SK-N-SH (cell line): ENCODE measurements at regions of chr20 and their contacts with region 1.

Region 1: DNA sequence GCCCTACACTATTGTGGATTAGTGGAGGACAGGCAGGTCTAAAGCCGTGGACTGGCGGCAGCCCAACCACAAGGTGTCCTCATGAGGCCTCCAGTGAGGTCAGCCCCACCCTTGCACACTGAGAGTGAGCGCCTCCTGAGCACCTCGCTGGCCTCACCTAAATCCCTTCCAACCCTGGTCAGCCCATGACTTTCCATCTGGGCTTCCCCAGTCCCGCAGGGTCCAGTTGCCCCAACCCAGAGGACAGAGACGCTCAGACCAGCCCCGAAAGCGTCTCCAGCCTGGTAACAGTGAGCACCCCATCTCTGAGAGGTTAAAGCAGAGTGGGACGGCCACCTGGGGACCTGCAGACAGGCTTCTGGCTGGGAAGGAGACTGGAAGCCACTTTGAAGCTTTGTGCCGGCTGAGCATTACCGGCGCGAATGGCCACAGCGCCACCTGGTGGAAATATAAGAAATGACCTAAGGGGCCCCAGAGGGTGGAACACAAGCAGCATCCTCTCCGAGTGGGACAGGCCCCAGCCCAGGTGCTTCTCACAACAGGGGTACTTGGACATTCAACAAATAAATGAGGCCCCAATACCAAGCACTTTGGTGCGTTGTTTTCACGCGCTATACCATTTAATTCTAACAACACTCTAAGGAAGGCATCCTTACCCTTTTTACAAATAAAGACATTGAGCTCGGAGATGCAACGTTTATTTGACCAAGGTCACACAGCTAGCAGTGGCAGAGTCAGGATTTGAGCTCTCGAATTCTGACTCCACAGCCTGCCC is 65.7 kb upstream of the TOP1 start:
- DNase-seq: peak; percentile 81
- H3K4me3 ChIP-seq: no peak overlapping the region; a peak in 1 of 4 replicates
- H3K27ac ChIP-seq: no peak overlapping the region
- H3K4me1 ChIP-seq: no peaks in the 10 kb centered on the region; a peak in 1 of 4 replicates
- H3K27me3 ChIP-seq: no peaks in the 10 kb centered on the region
- CTCF ChIP-seq: peak; percentile 81
- EP300 ChIP-seq: no peak
- RAD21 ChIP-seq: peak; percentile 91

Region 2: GRCh38 chr20:39264506-39265172 is 1698.3 kb before region 1 on chr20:
- CTCF ChIA-PET with region 1: interaction called, 17 read pairs
- POLR2A ChIA-PET with region 1: no interaction called
- DNase-seq: peak; percentile 64
- H3K4me3 ChIP-seq: no peak overlapping the region; a peak in 1 of 4 replicates
- H3K27ac ChIP-seq: no peak overlapping the region
- H3K4me1 ChIP-seq: peaks cover 0 to 11% of the 10 kb centered on the region in 2 experiments; a peak in 1 of 4 replicates
- H3K27me3 ChIP-seq: no peaks in the 10 kb centered on the region
- CTCF ChIP-seq: peak; percentile 83
- EP300 ChIP-seq: no peak
- RAD21 ChIP-seq: peak; percentile 67

Region 3: DNA sequence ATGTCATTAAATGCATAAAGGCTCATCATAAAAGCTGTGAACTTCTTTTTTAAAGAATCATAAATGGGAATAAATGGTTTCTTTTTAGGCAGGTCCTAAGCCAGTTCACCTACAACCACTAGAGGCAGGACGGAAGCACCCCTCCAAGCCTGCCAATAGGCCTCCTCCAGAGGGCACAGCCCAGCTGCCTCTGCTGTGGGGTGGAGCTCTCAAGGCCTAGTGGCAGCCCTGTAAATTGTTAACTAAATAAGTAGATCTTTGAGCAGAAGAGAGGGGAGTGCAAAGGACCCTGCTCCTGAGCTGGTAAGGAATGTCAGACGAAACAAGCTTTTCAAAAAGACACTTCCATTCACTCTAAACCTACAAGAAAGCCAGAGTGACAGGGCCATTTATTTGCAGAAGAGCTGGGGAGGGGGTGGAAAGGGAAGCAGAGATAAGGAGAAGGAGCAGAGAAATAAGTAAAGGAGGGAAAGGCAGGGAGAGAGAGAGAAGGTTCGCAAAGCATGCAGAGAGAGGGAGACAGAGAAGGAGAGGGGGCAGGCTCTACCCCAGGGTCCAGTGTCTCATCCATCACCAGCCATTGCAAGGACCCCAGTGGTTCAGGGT is 255.8 kb before region 1 on chr20:
- CTCF ChIA-PET with region 1: interaction called, 13 read pairs
- POLR2A ChIA-PET with region 1: no interaction called
- DNase-seq: no peak
- H3K4me3 ChIP-seq: no peak overlapping the region
- H3K27ac ChIP-seq: no peak overlapping the region
- H3K4me1 ChIP-seq: no peaks in the 10 kb centered on the region; a peak in 1 of 4 replicates
- H3K27me3 ChIP-seq: no peaks in the 10 kb centered on the region
- CTCF ChIP-seq: no peak
- EP300 ChIP-seq: no peak
- RAD21 ChIP-seq: 0 out of 2 replicates have a peak, but pooled peaks have one; percentile 6

Region 4: DNA sequence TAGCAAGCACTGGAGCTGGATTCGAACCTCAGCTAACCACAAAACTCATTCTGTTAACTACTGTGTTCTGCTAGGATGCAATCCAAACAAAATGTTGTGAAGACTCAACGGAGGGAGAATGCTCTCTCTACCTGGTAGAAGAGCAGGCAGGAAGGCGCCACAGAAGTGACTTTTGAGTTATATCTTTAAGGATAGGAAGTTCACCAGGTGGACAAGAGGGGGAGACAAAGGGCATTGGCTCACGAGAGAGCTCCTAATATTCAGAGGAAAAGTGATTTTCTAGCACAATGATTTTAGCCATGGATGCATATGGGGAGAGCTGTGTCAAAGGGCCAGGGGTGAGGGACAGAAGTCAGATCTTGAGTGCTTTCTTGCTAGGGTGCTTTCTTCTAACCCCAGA is 165.5 kb before region 1 on chr20:
- CTCF ChIA-PET with region 1: interaction called, 45 read pairs
- POLR2A ChIA-PET with region 1: no interaction called
- DNase-seq: no peak
- H3K4me3 ChIP-seq: no peak overlapping the region; a peak in 1 of 4 replicates
- H3K27ac ChIP-seq: no peak overlapping the region
- H3K4me1 ChIP-seq: no peaks in the 10 kb centered on the region
- H3K27me3 ChIP-seq: no peaks in the 10 kb centered on the region
- CTCF ChIP-seq: peak; percentile 51
- EP300 ChIP-seq: no peak
- RAD21 ChIP-seq: peak; percentile 71

Region 5: GRCh38 chr20:40945754-40946450 is 17.0 kb before region 1 on chr20:
- CTCF ChIA-PET with region 1: interaction called, 26 read pairs
- POLR2A ChIA-PET with region 1: no interaction called
- DNase-seq: peak; percentile 83
- H3K4me3 ChIP-seq: no peak overlapping the region
- H3K27ac ChIP-seq: no peak overlapping the region
- H3K4me1 ChIP-seq: no peaks in the 10 kb centered on the region; a peak in 1 of 4 replicates
- H3K27me3 ChIP-seq: no peaks in the 10 kb centered on the region
- CTCF ChIP-seq: peak; percentile 54
- EP300 ChIP-seq: no peak
- RAD21 ChIP-seq: peak; percentile 95

Region 6: GRCh38 chr20:40990542-40991120 is 27.7 kb after region 1 on chr20:
- CTCF ChIA-PET with region 1: interaction called, 17 read pairs
- POLR2A ChIA-PET with region 1: no interaction called
- DNase-seq: peak; percentile 84
- H3K4me3 ChIP-seq: no peak overlapping the region; a peak in 1 of 4 replicates
- H3K27ac ChIP-seq: no peak overlapping the region
- H3K4me1 ChIP-seq: peaks cover 2 to 11% of the 10 kb centered on the region in 2 experiments; a peak in 2 of 4 replicates
- H3K27me3 ChIP-seq: no peaks in the 10 kb centered on the region
- CTCF ChIP-seq: peak; percentile 85
- EP300 ChIP-seq: no peak
- RAD21 ChIP-seq: peak; percentile 94